WTC11 (cell line): ENCODE measurements at regions of chr12 and their contacts with region 1.

Region 1: GRCh38 chr12:51270067-51270970 is at the start of gene SMAGP:
- DNase-seq: peak; percentile 84
- ATAC-seq: peak; percentile 66
- H3K4me3 Mint-ChIP-seq: peak within 1 kb of the TSS; percentile 94
- H3K27ac Mint-ChIP-seq: peak within 1 kb of the TSS; percentile 74
- H3K4me1 Mint-ChIP-seq: peaks cover 23% of the 10 kb centered on the region
- H3K27me3 Mint-ChIP-seq: peaks cover 17% of the 10 kb centered on the region
- CTCF ChIP-seq: no peak
- total RNA-seq, gene SMAGP: 11.6 to 12.5 TPM (median 11.7 TPM) in 3 replicates

Region 2: GRCh38 chr12:51083126-51083833 is 187.0 kb before region 1 on chr12 and contains the start of gene CSRNP2:
- CTCF ChIA-PET with region 1: no interaction called
- POLR2A ChIA-PET with region 1: no interaction called
- DNase-seq: peak; percentile 98
- ATAC-seq: peak; percentile 97
- H3K4me3 Mint-ChIP-seq: peak within 1 kb of the TSS; percentile 99
- H3K27ac Mint-ChIP-seq: peak within 1 kb of the TSS; percentile 95
- H3K4me1 Mint-ChIP-seq: peaks cover 19% of the 10 kb centered on the region
- H3K27me3 Mint-ChIP-seq: no peaks in the 10 kb centered on the region
- CTCF ChIP-seq: no peak
- total RNA-seq, gene CSRNP2: 33.7 to 36.1 TPM (median 34.2 TPM) in 3 replicates

Region 3: GRCh38 chr12:51293696-51294095 is 23.4 kb after region 1 on chr12:
- CTCF ChIA-PET with region 1: interaction called, 11 read pairs
- POLR2A ChIA-PET with region 1: no interaction called
- DNase-seq: no peak
- ATAC-seq: no peak
- H3K4me3 Mint-ChIP-seq: no peak overlapping the region
- H3K27ac Mint-ChIP-seq: no peak overlapping the region
- H3K4me1 Mint-ChIP-seq: no peaks in the 10 kb centered on the region
- H3K27me3 Mint-ChIP-seq: no peaks in the 10 kb centered on the region
- CTCF ChIP-seq: no peak

Region 4: GRCh38 chr12:51320695-51321320 is 50.5 kb after region 1 on chr12:
- CTCF ChIA-PET with region 1: interaction called, 14 read pairs
- POLR2A ChIA-PET with region 1: no interaction called
- DNase-seq: no peak
- ATAC-seq: peak; percentile 86
- H3K4me3 Mint-ChIP-seq: no peak overlapping the region
- H3K27ac Mint-ChIP-seq: peak overlapping the region; percentile 93
- H3K4me1 Mint-ChIP-seq: peaks cover 31% of the 10 kb centered on the region
- H3K27me3 Mint-ChIP-seq: no peaks in the 10 kb centered on the region
- CTCF ChIP-seq: no peak

Region 5: GRCh38 chr12:51351913-51352532 is 81.7 kb after region 1 on chr12:
- CTCF ChIA-PET with region 1: interaction called, 30 read pairs
- POLR2A ChIA-PET with region 1: no interaction called
- DNase-seq: peak; percentile 84
- ATAC-seq: peak; percentile 97
- H3K4me3 Mint-ChIP-seq: no peak overlapping the region
- H3K27ac Mint-ChIP-seq: no peak overlapping the region
- H3K4me1 Mint-ChIP-seq: peaks cover 10% of the 10 kb centered on the region
- H3K27me3 Mint-ChIP-seq: no peaks in the 10 kb centered on the region; the same call in 1 of the 2 replicates
- CTCF ChIP-seq: peak; percentile 74